Panc1 (cell line): ENCODE measurements at regions of chr17 and their contacts with region 1.

Region 1: DNA sequence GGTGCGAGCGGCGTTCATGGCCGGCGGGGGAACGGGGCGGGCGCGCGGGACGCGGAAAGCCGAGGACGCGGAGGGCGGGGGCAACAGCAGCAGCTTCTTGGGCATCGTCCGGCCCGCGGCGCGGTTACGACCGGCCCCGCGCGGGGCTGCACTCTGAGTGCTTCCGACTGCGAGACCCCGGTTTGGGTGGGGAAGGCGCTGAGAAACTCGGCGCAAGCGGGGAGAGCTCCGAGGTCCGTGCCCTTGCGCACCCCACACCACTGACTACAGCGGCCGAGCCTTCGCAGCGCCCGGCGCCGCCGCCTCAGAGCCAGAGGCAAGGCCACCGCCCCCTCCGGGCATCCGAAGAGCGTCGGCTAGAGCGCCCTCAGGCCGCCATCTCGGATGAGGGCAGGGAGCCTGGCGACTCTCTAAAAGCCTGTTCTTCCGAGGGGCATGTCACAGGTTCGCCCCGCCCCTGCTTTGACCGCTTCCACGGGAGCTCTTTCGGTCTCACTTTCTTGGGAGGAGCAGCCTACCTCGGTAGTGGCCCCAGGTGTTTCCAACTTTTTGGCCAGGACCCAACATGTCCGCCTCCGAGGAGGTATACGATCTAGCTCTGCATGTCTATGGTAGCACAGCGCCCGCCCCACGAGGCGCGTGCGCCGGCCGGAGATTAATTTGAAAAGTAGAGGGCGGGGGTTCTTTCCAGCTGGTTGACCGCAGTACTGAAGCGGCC is at the start of gene PRPSAP1:
- DNase-seq: peak; percentile 74
- ATAC-seq: peak; percentile 97
- H3K4me3 ChIP-seq: peak within 1 kb of the TSS; percentile 78 to 89
- H3K27ac ChIP-seq: peak within 1 kb of the TSS; percentile 94
- H3K4me1 ChIP-seq: peaks cover 16% of the 10 kb centered on the region
- H3K27me3 ChIP-seq: no peaks in the 10 kb centered on the region
- CTCF ChIP-seq: no peak
- total RNA-seq, gene PRPSAP1: 99.6 TPM

Region 2: DNA sequence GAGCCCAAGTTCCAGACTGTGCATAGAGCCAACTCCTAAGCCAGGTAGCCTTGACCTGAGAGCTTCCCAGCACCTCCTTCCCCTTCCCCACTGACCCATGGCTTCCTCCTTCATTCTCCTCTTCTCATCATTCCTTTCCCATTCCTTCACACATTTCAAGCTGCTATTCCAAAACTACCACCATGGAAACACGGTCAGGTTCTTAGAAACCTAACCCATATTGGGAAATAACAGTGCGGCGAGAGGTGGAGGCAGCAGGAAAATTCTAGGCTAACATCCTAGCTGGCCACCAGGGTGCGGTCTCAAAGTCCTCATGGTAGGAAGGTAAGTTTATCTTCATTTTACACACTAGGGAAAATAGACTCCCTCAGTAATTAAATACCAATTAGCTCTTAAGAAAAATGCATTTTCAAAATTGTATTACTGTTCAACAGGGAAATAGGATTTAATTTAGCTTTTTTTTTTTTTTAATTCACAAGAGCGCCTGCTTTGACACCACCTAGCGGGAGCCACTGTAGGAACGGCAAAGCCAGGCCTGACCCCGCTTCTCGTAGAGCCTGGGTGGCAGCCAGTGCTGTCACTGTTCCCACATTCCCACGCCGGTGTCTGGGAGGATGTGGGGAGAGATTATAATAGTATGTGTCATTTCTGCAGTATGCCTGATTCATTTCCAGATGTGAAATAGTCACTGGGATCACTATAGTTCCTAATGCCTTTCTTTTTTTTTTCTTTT is 16.7 kb after region 1 on chr17:
- CTCF ChIA-PET with region 1: interaction called, 14 read pairs
- POLR2A ChIA-PET with region 1: no interaction called
- in situ Hi-C with region 1: no loop called
- intact Hi-C with region 1: no loop called
- DNase-seq: no peak
- ATAC-seq: peak; percentile 78
- H3K4me3 ChIP-seq: no peak overlapping the region
- H3K27ac ChIP-seq: no peak overlapping the region
- H3K4me1 ChIP-seq: 0 out of 2 replicates have a peak, but pooled peaks cover 5% of the 10 kb centered on the region
- H3K27me3 ChIP-seq: no peaks in the 10 kb centered on the region
- CTCF ChIP-seq: peak; percentile 82